ENCODE measurements at regions of chr10 and their contacts with region 1.

Region 1: DNA sequence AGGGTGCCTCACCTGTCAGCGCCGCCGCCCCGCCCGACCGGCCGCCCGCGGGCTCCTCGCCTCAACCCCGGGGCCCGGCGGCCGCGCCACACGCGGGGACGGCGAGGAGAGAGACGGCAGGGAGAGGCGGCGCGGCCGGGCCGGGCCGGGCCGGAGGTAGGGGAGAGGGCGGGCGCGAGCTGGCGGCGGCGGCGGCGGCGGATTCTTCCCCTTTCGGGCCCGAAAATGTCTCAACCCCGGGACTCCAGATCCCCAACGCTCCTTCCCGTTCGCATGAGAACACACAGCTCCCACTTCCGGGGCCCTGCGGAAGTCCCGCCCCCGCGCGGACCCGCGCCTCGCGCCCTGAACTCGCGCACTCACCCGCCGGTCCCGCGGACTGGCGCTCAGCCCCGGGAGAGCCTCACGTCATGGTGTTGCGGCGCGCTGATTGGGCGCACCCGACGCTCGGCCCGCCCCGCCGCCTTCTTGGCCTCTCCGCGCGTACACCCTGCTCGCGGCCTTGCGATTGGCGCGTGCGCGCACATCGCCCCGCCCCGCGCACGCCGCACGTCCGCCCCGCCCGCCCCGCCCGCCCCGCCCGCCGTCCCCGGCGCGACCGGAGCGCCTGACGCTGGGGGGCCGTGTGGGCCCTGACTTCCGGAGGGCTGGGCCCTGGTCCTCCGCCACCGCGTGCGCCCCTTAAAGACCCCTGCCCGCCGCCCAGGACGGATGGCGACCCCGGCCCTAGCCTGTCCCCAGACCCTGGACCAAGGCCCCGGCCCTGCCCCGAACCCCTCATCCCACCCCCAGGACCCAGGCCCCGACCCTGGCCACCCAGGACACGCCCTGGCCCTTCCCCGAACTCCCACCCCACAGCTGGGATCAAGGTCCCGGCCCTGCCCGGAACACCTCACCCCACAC is at the start of gene LARP4B:
- DNase-seq: peak; percentile 98
- H3K4me3 Mint-ChIP-seq: peak within 1 kb of the TSS; percentile 95
- H3K27ac Mint-ChIP-seq: peak within 1 kb of the TSS; percentile 93
- H3K4me1 Mint-ChIP-seq: peaks cover 33% of the 10 kb centered on the region
- H3K27me3 Mint-ChIP-seq: no peaks in the 10 kb centered on the region
- total RNA-seq, gene LARP4B: 137 and 152 TPM in 2 replicates

Region 2: DNA sequence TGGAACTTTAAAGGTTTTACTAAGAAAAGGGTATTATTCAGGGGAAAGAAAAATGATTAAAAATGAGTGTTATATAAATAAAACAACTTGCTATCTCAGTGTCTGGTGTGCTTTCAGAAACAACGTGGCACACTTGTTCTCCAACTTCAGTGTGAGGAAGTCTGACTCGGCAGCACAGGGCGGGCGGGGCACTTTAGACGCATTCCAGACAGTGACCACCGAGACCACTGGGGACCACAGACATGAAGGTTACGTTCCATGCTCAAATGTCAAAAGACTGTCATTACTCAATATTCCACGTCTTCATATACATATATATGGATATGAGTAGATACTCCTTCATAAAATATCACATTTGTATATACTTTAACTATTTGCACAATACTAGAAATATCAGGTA is 87.1 kb before region 1 on chr10:
- intact Hi-C with region 1: no loop called
- DNase-seq: no peak
- H3K4me3 Mint-ChIP-seq: no peak overlapping the region
- H3K27ac Mint-ChIP-seq: peak overlapping the region; percentile 35
- H3K4me1 Mint-ChIP-seq: peaks cover 36% of the 10 kb centered on the region
- H3K27me3 Mint-ChIP-seq: no peaks in the 10 kb centered on the region

Region 3: GRCh38 chr10:920450-920849 is 11.2 kb before region 1 on chr10:
- intact Hi-C with region 1: no loop called
- DNase-seq: no peak
- H3K4me3 Mint-ChIP-seq: no peak overlapping the region
- H3K27ac Mint-ChIP-seq: no peak overlapping the region
- H3K4me1 Mint-ChIP-seq: peaks cover 12% of the 10 kb centered on the region
- H3K27me3 Mint-ChIP-seq: no peaks in the 10 kb centered on the region

Region 4: DNA sequence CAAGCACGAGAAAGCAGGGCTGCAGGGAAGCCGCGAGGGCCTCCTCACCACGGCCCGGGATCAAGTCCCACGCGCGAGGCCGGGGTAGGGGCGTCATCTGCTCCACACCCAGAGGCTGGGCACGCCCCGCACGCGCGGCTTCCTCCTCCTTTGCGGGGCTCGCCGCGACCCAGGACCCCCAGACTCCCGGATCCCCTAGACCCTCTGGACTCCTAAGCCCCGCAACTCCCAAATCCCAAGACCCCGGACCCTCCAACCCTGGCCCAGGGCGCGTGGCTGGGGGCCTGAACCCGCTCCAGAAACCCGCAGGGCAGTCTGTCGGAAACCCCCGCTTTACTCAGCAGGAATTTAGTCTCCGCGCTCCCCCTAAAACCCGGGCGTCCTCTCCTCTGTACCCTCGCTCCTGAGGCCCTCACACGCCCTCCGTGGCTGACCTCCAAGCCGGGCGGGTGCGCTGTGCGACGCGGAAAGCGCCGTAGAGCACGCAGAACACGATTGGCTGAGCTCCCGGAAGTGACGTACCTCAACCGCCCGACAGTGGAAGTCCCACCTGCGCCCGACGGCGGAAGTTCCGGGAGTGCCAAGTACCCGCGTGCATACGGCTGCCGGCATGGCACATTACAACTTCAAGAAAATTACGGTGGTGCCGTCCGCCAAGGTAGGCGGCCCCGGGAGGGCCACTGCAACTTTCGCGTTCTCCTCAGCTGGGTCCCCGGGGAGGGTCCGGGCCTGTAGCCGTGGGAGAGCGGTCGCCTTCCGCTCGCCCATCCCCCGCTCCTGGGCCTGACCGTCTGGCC is 56.4 kb after region 1 on chr10 and contains the start of gene GTPBP4:
- intact Hi-C with region 1: loop called (anchors 1 kb)
- DNase-seq: peak; percentile 94
- H3K4me3 Mint-ChIP-seq: peak within 1 kb of the TSS; percentile 91
- H3K27ac Mint-ChIP-seq: peak within 1 kb of the TSS; percentile 93
- H3K4me1 Mint-ChIP-seq: peaks cover 22% of the 10 kb centered on the region
- H3K27me3 Mint-ChIP-seq: no peaks in the 10 kb centered on the region
- total RNA-seq, gene GTPBP4: 134 and 135 TPM in 2 replicates

Region 5: DNA sequence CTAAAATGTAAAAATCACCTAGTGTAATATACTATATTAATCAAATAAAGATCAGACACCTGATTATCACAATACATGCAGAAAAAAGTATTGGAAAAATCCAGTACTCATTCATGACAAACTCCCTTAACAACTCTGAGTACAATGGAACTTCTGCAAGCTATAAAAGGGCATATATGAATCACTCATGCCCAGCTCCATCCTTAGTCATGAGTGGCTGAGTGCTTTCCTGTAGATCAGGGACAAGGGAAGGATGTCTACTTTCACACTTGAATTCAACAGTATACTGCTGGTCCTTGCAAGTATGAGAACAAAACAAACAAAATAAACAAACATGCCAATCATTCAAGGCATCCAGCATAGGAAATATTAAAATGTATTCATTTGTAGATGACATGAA is 689.1 kb after region 1 on chr10:
- intact Hi-C with region 1: no loop called
- DNase-seq: no peak
- H3K4me3 Mint-ChIP-seq: no peak overlapping the region
- H3K27ac Mint-ChIP-seq: no peak overlapping the region
- H3K4me1 Mint-ChIP-seq: no peaks in the 10 kb centered on the region
- H3K27me3 Mint-ChIP-seq: no peaks in the 10 kb centered on the region